T-cell (primary cell): ENCODE measurements at regions of chr11 and their contacts with region 1.

Region 1: DNA sequence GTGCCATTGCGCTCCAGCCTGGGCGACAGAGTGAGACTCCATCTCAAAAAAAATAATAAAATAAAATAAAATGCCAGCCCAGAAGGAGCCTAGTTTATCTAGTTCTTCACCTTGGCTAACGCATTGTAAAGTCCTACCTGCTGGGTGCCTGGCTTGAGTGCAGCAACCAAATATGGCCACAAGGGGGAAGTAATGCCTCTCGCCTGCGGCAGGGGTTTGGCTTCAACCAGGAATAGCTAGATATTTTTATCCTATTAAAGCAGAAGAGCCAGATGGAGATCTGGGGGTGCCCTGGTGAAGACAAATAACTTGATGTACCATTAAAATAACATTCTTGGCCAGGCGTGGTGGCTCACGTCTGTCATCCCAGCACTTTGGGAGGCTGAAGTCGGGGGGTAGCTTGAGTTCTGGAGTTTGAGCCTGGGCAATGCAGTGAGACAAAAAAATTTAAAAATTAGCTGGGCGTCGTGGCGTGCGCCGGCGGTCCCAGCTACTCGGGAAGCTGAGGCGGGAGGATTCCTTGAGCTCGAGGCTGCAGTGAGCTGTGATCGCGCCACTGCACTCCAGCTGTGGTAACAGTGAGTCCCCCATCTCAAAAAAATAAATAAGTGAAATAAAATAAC is 20.6 kb upstream of the PLEKHB1 start:
- DNase-seq: peak; percentile 32 to 82 (median 57)
- ATAC-seq: peak; percentile 78 to 90 (median 84)
- H3K4me3 ChIP-seq: no peak overlapping the region
- H3K4me3 Mint-ChIP-seq: no peak overlapping the region
- H3K27ac ChIP-seq: no peak overlapping the region
- H3K27ac Mint-ChIP-seq: no peak overlapping the region
- H3K4me1 ChIP-seq: peaks cover 0 to 4% of the 10 kb centered on the region in 2 experiments
- H3K4me1 Mint-ChIP-seq: peaks cover 0 to 3% (median 3%) of the 10 kb centered on the region in 3 donors
- H3K27me3 ChIP-seq: peaks cover 0 to 19% of the 10 kb centered on the region in 2 experiments
- H3K27me3 Mint-ChIP-seq: peaks cover 21 to 29% of the 10 kb centered on the region in 2 donors

Region 2: DNA sequence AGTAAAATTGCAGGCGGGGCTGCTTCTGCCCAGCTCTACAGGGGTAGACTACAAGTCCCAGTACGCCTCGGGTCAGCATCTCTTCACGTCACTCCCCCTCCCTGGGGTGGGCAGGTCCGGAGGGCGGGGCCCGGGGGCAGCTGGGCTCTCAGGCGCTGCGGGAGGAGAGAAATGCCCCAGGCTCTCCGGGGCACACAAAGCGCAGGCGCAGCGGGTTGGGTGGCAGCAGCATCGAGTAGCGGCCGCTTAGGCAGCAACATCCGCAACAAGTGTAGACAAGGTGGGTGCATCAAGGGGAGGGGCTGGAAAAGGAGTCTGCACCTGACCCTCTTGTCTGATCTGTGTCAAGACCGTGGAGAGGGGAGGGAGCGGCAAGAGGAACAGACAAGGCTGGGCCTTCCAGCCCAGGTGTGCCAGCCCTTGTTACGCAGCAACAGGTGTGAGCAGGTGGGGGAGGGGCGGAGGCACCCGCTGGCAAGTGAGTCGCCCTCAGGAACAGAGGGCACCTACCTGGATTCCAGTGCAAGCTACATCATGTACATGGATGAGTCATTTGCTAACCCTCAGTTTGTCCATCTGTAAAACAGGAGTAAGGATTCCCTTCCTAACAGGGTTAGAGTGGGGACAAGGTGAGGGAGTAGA is 21.8 kb after region 1 on chr11:
- CTCF ChIA-PET with region 1: interaction called, 3 to 13 read pairs
- POLR2A ChIA-PET with region 1: interaction called in 1 of 2 experiments, 4 read pairs
- DNase-seq: peak; percentile 87 to 97 (median 92)
- ATAC-seq: peak; percentile 97 to 100 (median 98)
- H3K4me3 ChIP-seq: peak overlapping the region; percentile 35 to 64
- H3K4me3 Mint-ChIP-seq: peak overlapping the region; percentile 83 to 85 (median 83)
- H3K27ac ChIP-seq: peak overlapping the region; percentile 56
- H3K27ac Mint-ChIP-seq: peak overlapping the region; percentile 84 to 92
- H3K4me1 ChIP-seq: peaks cover 9 to 24% of the 10 kb centered on the region in 2 experiments
- H3K4me1 Mint-ChIP-seq: peaks cover 24 to 30% (median 25%) of the 10 kb centered on the region in 3 donors
- H3K27me3 ChIP-seq: no peaks in the 10 kb centered on the region
- H3K27me3 Mint-ChIP-seq: no peaks in the 10 kb centered on the region

Region 3: DNA sequence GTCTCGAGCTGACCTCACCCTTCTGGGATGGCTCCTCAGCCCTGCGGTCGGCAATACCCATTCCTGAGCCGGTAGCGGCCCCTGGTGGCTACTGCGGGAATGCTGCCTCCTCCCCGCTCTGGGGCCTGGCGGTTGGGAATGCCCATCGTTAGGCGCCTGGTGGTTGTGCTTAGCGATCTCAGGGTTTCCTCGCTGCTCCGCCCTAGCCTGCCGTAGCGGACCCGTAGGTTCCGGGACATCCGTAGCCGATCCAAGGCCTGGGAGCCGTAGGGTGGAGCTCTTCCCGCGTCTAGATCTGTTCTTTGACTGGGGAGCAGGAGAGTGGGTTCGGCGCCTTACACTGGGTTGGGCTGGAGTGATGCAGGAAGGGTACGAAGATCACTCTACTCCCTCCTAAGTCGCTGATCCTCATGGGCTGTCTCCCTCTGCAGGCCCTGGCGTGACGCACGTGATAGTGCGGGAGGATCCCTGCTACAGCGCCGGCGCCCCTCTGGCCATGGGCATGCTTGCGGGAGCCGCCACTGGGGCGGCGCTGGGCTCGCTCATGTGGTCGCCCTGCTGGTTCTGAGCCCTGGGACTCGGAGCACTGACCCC is 35.3 kb after region 1 on chr11:
- CTCF ChIA-PET with region 1: interaction called, 46 to 68 read pairs
- POLR2A ChIA-PET with region 1: interaction called, 3 to 7 read pairs
- DNase-seq: peak; percentile 45 to 90 (median 74)
- ATAC-seq: peak; percentile 85 to 98 (median 90)
- H3K4me3 ChIP-seq: peak overlapping the region in 1 of 2 donors; percentile 9
- H3K4me3 Mint-ChIP-seq: peak overlapping the region in 2 of 3 donors; percentile 22 to 52
- H3K27ac ChIP-seq: no peak overlapping the region
- H3K27ac Mint-ChIP-seq: no peak overlapping the region
- H3K4me1 ChIP-seq: peaks cover 0 to 17% of the 10 kb centered on the region in 2 experiments
- H3K4me1 Mint-ChIP-seq: peaks cover 12 to 20% (median 18%) of the 10 kb centered on the region in 3 donors
- H3K27me3 ChIP-seq: peaks cover 0 to 7% of the 10 kb centered on the region in 2 experiments
- H3K27me3 Mint-ChIP-seq: no peaks in the 10 kb centered on the region